Left cardiac atrium (tissue), 4 donors: ENCODE measurements at regions of chr4 and their contacts with region 1.

Region 1: GRCh38 chr4:25180524-25181131 is 20.4 kb upstream of the SEPSECS start:
- DNase-seq: peak; percentile 25
- ATAC-seq: peak in 1 of 2 donors; percentile 55

Region 2: GRCh38 chr4:25367004-25367621 is 186.5 kb after region 1 on chr4:
- intact Hi-C with region 1: loop called in 1 of 2 experiments (anchors 5 kb)
- DNase-seq: no peak
- ATAC-seq: no peak